HepG2 (cell line): ENCODE measurements at regions of chr4 and their contacts with region 1.

Region 1: DNA sequence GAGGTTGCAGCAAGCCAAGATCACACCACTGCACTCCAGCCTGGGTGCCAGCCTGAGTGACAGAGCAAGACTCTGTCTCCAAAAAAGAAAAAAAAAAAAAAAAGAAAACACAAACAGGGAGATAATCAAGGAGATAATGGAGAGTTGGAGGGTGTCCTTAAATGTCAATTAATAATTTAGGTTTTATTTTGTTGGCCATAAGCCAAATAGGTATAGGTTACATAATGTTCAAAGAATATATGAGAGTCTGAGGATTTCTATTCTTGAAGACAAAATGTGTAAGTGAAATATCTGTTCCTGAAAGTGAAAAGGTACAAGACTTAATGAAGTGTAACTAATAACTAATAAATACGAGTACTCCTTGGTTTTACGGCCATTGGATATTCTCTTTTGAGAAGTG is 30.4 kb upstream of the ADAM29 start:
- DNase-seq: no peak
- ATAC-seq: no peak
- H3K4me3 ChIP-seq: no peak overlapping the region
- H3K27ac ChIP-seq: no peak overlapping the region
- H3K4me1 ChIP-seq: no peaks in the 10 kb centered on the region
- H3K27me3 ChIP-seq: no peaks in the 10 kb centered on the region
- CTCF ChIP-seq: no peak
- EP300 ChIP-seq: no peak
- POLR2A ChIP-seq: no peak
- RAD21 ChIP-seq: no peak

Region 2: GRCh38 chr4:172900930-172901329 is 1986.8 kb before region 1 on chr4:
- CTCF ChIA-PET with region 1: no interaction called
- POLR2A ChIA-PET with region 1: no interaction called
- in situ Hi-C with region 1: no loop called
- intact Hi-C with region 1: loop called (anchors 5 kb)
- DNase-seq: no peak
- ATAC-seq: no peak
- H3K4me3 ChIP-seq: no peak overlapping the region
- H3K27ac ChIP-seq: no peak overlapping the region
- H3K4me1 ChIP-seq: 0 out of 2 replicates have a peak, but pooled peaks cover 8% of the 10 kb centered on the region
- H3K27me3 ChIP-seq: no peaks in the 10 kb centered on the region
- CTCF ChIP-seq: no peak
- EP300 ChIP-seq: no peak
- POLR2A ChIP-seq: no peak
- RAD21 ChIP-seq: no peak